B cell (primary cell): ENCODE measurements at regions of chr7 and their contacts with region 1.

Region 1: GRCh38 chr7:6350433-6351058 is 78.1 kb upstream of the CYTH3 start:
- DNase-seq: peak; percentile 25
- ATAC-seq: no peak
- H3K4me3 ChIP-seq: no peak overlapping the region
- H3K4me3 Mint-ChIP-seq: peak overlapping the region; percentile 78
- H3K27ac ChIP-seq: peak overlapping the region in 1 of 2 donors; percentile 49
- H3K27ac Mint-ChIP-seq: peak overlapping the region; percentile 84
- H3K4me1 ChIP-seq: peaks cover 17 to 35% of the 10 kb centered on the region in 2 donors
- H3K4me1 Mint-ChIP-seq: peaks cover 24% of the 10 kb centered on the region
- H3K27me3 ChIP-seq: no peaks in the 10 kb centered on the region
- H3K27me3 Mint-ChIP-seq: no peaks in the 10 kb centered on the region
- CTCF ChIP-seq: no peak

Region 2: GRCh38 chr7:6106140-6106904 is 244.2 kb before region 1 on chr7:
- CTCF ChIA-PET with region 1: no interaction called
- POLR2A ChIA-PET with region 1: no interaction called
- intact Hi-C with region 1: no loop called
- DNase-seq: peak; percentile 51
- ATAC-seq: no peak
- H3K4me3 ChIP-seq: peak overlapping the region; percentile 58 to 76 (median 70)
- H3K4me3 Mint-ChIP-seq: peak overlapping the region; percentile 88
- H3K27ac ChIP-seq: peak overlapping the region; percentile 60 to 71
- H3K27ac Mint-ChIP-seq: peak overlapping the region; percentile 86
- H3K4me1 ChIP-seq: peaks cover 13 to 24% of the 10 kb centered on the region in 2 donors
- H3K4me1 Mint-ChIP-seq: peaks cover 31% of the 10 kb centered on the region
- H3K27me3 ChIP-seq: no peaks in the 10 kb centered on the region
- H3K27me3 Mint-ChIP-seq: no peaks in the 10 kb centered on the region
- CTCF ChIP-seq: peak; percentile 18

Region 3: DNA sequence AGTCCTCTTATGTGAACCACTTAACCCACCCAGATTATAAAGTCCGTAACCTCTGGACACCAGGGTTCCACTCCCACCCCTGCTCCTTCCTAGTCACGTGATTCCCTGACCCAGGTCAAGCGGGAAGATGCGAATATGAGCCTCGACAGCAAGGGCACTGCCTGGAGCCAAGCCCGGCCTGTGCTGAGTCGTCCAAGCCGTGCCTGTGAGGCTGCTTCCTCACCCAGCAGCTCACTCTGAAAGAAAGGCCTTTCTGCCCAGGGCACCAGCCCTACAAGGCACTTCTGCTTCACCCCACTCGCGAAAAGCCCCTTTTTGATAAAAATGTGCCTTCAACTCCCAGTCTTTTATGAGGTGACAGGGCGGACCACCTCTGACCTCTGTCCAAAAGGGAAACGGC is 164.0 kb before region 1 on chr7:
- CTCF ChIA-PET with region 1: no interaction called
- POLR2A ChIA-PET with region 1: no interaction called
- intact Hi-C with region 1: no loop called
- DNase-seq: no peak
- ATAC-seq: no peak
- H3K4me3 ChIP-seq: no peak overlapping the region
- H3K4me3 Mint-ChIP-seq: no peak overlapping the region
- H3K27ac ChIP-seq: no peak overlapping the region
- H3K27ac Mint-ChIP-seq: no peak overlapping the region
- H3K4me1 ChIP-seq: no peaks in the 10 kb centered on the region
- H3K4me1 Mint-ChIP-seq: no peaks in the 10 kb centered on the region
- H3K27me3 ChIP-seq: no peaks in the 10 kb centered on the region
- H3K27me3 Mint-ChIP-seq: no peaks in the 10 kb centered on the region
- CTCF ChIP-seq: no peak

Region 4: GRCh38 chr7:6385110-6385971 is 34.8 kb after region 1 on chr7:
- CTCF ChIA-PET with region 1: no interaction called
- POLR2A ChIA-PET with region 1: no interaction called
- intact Hi-C with region 1: loop called (anchors 5 kb)
- DNase-seq: no peak
- ATAC-seq: no peak
- H3K4me3 ChIP-seq: no peak overlapping the region
- H3K4me3 Mint-ChIP-seq: no peak overlapping the region
- H3K27ac ChIP-seq: peak overlapping the region in 1 of 2 donors; percentile 63
- H3K27ac Mint-ChIP-seq: peak overlapping the region; percentile 1
- H3K4me1 ChIP-seq: peaks cover 39 to 55% of the 10 kb centered on the region in 2 donors
- H3K4me1 Mint-ChIP-seq: peaks cover 58% of the 10 kb centered on the region
- H3K27me3 ChIP-seq: no peaks in the 10 kb centered on the region
- H3K27me3 Mint-ChIP-seq: no peaks in the 10 kb centered on the region
- CTCF ChIP-seq: no peak